CD8-positive, alpha-beta memory T cell (primary cell): ENCODE measurements at regions of chr3 and their contacts with region 1.

Region 1: GRCh38 chr3:48000212-48000611 is 16.0 kb downstream of the MAP4 start:
- DNase-seq: no peak
- H3K4me3 ChIP-seq: no peak overlapping the region
- H3K4me3 Mint-ChIP-seq: no peak overlapping the region
- H3K27ac ChIP-seq: no peak overlapping the region
- H3K27ac Mint-ChIP-seq: no peak overlapping the region
- H3K4me1 ChIP-seq: no peaks in the 10 kb centered on the region
- H3K4me1 Mint-ChIP-seq: peaks cover 10 to 44% (median 35%) of the 10 kb centered on the region in 3 donors
- H3K27me3 ChIP-seq: no peaks in the 10 kb centered on the region
- H3K27me3 Mint-ChIP-seq: no peaks in the 10 kb centered on the region

Region 2: GRCh38 chr3:47989981-47990440 is 10.2 kb before region 1 on chr3:
- CTCF ChIA-PET with region 1: interaction called, 13 read pairs
- POLR2A ChIA-PET with region 1: no interaction called
- DNase-seq: peak; percentile 46 to 80 (median 59)
- H3K4me3 ChIP-seq: no peak overlapping the region
- H3K4me3 Mint-ChIP-seq: no peak overlapping the region
- H3K27ac ChIP-seq: no peak overlapping the region
- H3K27ac Mint-ChIP-seq: peak overlapping the region in 1 of 8 donors; percentile 14
- H3K4me1 ChIP-seq: no peaks in the 10 kb centered on the region
- H3K4me1 Mint-ChIP-seq: peaks cover 3 to 9% (median 8%) of the 10 kb centered on the region in 3 donors
- H3K27me3 ChIP-seq: no peaks in the 10 kb centered on the region
- H3K27me3 Mint-ChIP-seq: no peaks in the 10 kb centered on the region